Dorsolateral prefrontal cortex (tissue), 120 donors: ENCODE measurements at regions of chr4 and their contacts with region 1.

Region 1: DNA sequence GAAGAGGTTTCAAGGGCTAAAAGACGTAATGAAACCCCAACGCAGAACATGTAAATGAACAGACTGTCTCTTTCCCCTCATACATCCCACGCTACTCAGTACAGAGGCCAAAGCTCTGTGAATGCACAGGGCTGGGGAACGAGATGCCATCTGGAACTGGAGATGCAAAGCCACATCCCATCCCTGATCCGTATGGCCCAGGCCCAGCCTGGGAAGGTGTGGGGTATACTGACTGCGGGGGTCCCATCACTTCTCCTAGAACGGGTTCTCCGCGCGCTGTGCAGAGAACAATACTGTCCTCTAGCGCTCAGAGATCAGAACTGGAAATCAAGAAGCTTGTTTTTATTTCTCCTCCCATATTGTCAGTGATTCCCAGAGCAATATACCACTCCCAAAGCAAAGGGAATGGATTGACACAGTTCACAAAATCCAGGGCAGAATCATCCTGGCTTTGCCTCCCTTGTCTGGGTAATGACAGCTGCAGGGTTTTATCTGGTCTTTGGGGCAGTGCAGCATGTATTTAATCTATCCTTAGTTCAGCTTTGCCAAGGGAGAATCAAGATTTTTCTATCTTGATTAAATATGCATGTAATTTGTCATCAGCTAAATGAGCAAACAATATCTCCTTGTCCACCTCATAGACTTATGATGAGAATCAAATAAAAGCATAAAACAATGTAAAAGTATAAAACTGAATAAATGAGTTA is 47.3 kb upstream of the TLR3 start:
- DNase-seq: peak in 6 of 10 donors; percentile 21 to 70 (median 54)
- H3K4me3 ChIP-seq: peak overlapping the region in 40 of 59 donors; percentile 3 to 54 (median 35)
- H3K27ac ChIP-seq: peak overlapping the region in 46 of 59 donors; percentile 1 to 78 (median 50)
- H3K27me3 ChIP-seq: no peaks in the 10 kb centered on the region
- CTCF ChIP-seq: peak; percentile 30 to 87 (median 72)

Region 2: GRCh38 chr4:185648631-185649030 is 373.0 kb before region 1 on chr4:
- intact Hi-C with region 1: loop called (anchors 5 kb)
- DNase-seq: no peak
- H3K4me3 ChIP-seq: no peak overlapping the region
- H3K27ac ChIP-seq: no peak overlapping the region
- H3K27me3 ChIP-seq: no peaks in the 10 kb centered on the region
- CTCF ChIP-seq: no peak